ENCODE measurements at regions of chr16 and their contacts with region 1.

Region 1: GRCh38 chr16:23359092-23359760 is 57.1 kb downstream of the SCNN1B start:
- DNase-seq: no peak
- ATAC-seq: no peak
- H3K4me3 ChIP-seq: no peak overlapping the region
- H3K27ac ChIP-seq: no peak overlapping the region
- H3K4me1 ChIP-seq: no peaks in the 10 kb centered on the region
- H3K27me3 ChIP-seq: no peaks in the 10 kb centered on the region
- CTCF ChIP-seq: no peak

Region 2: GRCh38 chr16:22625967-22626366 is 733.3 kb before region 1 on chr16:
- intact Hi-C with region 1: no loop called
- DNase-seq: no peak
- ATAC-seq: no peak
- H3K4me3 ChIP-seq: no peak overlapping the region
- H3K27ac ChIP-seq: no peak overlapping the region
- H3K4me1 ChIP-seq: no peaks in the 10 kb centered on the region
- H3K27me3 ChIP-seq: peaks cover 0 to 9% (median 0%) of the 10 kb centered on the region in 3 donors
- CTCF ChIP-seq: no peak

Region 3: DNA sequence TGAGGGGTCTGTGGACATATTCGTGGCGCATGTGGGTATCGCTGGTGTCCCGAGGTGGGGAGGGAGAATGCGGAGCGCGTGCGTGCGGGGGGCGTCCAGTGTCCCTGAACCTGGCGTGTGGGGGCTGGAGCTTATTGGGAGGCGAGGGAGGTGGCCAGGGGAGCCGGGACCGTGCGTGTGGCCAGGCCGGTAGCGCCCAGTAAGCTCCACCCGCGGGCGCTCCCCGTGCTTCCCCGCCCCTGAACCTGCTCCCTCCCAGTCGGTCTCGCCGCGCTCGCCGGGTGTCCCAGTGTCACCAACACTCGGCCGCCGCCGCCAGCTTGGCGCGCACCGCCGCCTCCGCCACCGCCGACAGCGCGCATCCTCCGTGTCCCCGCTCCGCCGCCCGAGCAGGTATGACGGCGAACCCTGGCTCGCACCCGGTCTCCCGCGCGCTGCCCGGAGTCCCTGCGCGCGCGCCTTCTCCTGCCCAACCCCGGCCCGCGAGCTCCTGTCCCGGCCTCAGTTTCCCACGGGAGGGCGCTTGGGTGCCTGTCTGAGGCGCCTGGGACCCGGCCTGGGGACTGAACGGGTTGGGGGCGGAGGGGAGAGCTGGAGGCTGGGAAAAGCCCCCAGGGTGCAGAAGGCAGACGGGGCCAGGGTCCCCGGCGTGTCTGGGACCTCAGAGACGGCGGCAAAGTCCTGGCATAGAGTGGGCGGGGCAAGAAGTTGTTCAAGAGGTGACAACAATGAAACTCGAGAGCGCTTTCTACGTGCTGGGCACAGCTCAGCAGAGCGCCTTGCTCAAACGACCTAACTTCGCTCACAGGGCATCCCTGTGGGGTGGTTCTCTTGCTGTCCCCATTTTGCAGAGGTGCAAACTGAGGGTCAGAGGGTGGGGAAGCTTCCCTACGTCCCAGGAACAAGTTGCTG is 56.9 kb before region 1 on chr16 and contains the start of gene SCNN1B:
- intact Hi-C with region 1: loop called in 1 of 2 experiments (anchors 10 kb)
- DNase-seq: no peak
- ATAC-seq: no peak
- H3K4me3 ChIP-seq: peak within 1 kb of the TSS; percentile 46
- H3K27ac ChIP-seq: no peak within 1 kb of the TSS
- H3K4me1 ChIP-seq: no peaks in the 10 kb centered on the region
- H3K27me3 ChIP-seq: peaks cover 0 to 34% (median 12%) of the 10 kb centered on the region in 3 donors
- CTCF ChIP-seq: no peak
- total RNA-seq, gene SCNN1B: 0.16 to 0.67 (median 0.41) TPM

Region 4: GRCh38 chr16:23391381-23392222 is 32.4 kb after region 1 on chr16:
- intact Hi-C with region 1: no loop called
- DNase-seq: no peak
- ATAC-seq: no peak
- H3K4me3 ChIP-seq: no peak overlapping the region
- H3K27ac ChIP-seq: peak overlapping the region; percentile 66
- H3K4me1 ChIP-seq: peaks cover 20% of the 10 kb centered on the region
- H3K27me3 ChIP-seq: no peaks in the 10 kb centered on the region
- CTCF ChIP-seq: no peak